Gastrocnemius medialis (tissue), 4 donors: ENCODE measurements at regions of chr18 and their contacts with region 1.

Region 1: GRCh38 chr18:43571078-43571689 is 293.9 kb upstream of the SYT4 start:
- DNase-seq: no peak
- ATAC-seq: no peak
- H3K4me3 ChIP-seq: no peak overlapping the region
- H3K27ac ChIP-seq: no peak overlapping the region
- H3K4me1 ChIP-seq: no peaks in the 10 kb centered on the region
- H3K27me3 ChIP-seq: no peaks in the 10 kb centered on the region
- CTCF ChIP-seq: peak in 4 of 5 experiments; percentile 21 to 62 (median 52)
- POLR2A ChIP-seq: no peak

Region 2: GRCh38 chr18:42114310-42114943 is 1456.8 kb before region 1 on chr18:
- in situ Hi-C with region 1: loop called (anchors 25 kb)
- intact Hi-C with region 1: no loop called
- DNase-seq: peak; percentile 11 to 30
- ATAC-seq: peak; percentile 77 to 79
- H3K4me3 ChIP-seq: peak overlapping the region in 2 of 4 donors; percentile 18 to 39
- H3K27ac ChIP-seq: no peak overlapping the region
- H3K4me1 ChIP-seq: peaks cover 0 to 8% of the 10 kb centered on the region in 2 donors
- H3K27me3 ChIP-seq: no peaks in the 10 kb centered on the region
- CTCF ChIP-seq: peak; percentile 50 to 87 (median 65)
- POLR2A ChIP-seq: no peak

Region 3: GRCh38 chr18:42298759-42299675 is 1272.2 kb before region 1 on chr18:
- in situ Hi-C with region 1: loop called in 2 of 4 experiments (anchors 25 kb)
- intact Hi-C with region 1: no loop called
- DNase-seq: peak; percentile 46 to 53
- ATAC-seq: peak; percentile 73
- H3K4me3 ChIP-seq: peak overlapping the region in 3 of 4 donors; percentile 25 to 38 (median 26)
- H3K27ac ChIP-seq: peak overlapping the region in 1 of 4 donors; percentile 35
- H3K4me1 ChIP-seq: no peaks in the 10 kb centered on the region
- H3K27me3 ChIP-seq: no peaks in the 10 kb centered on the region
- CTCF ChIP-seq: peak; percentile 53 to 78 (median 68)
- POLR2A ChIP-seq: no peak

Region 4: GRCh38 chr18:42310956-42311355 is 1260.2 kb before region 1 on chr18:
- in situ Hi-C with region 1: loop called in 1 of 4 experiments (anchors 25 kb)
- intact Hi-C with region 1: no loop called
- DNase-seq: peak; percentile 29 to 64
- ATAC-seq: peak; percentile 75 to 76
- H3K4me3 ChIP-seq: no peak overlapping the region
- H3K27ac ChIP-seq: no peak overlapping the region
- H3K4me1 ChIP-seq: no peaks in the 10 kb centered on the region
- H3K27me3 ChIP-seq: no peaks in the 10 kb centered on the region
- CTCF ChIP-seq: no peak
- POLR2A ChIP-seq: no peak

Region 5: GRCh38 chr18:43587538-43588153 is 16.5 kb after region 1 on chr18:
- in situ Hi-C with region 1: no loop called
- intact Hi-C with region 1: loop called (anchors 1 kb)
- DNase-seq: no peak
- ATAC-seq: peak in 1 of 2 donors; percentile 21
- H3K4me3 ChIP-seq: no peak overlapping the region
- H3K27ac ChIP-seq: no peak overlapping the region
- H3K4me1 ChIP-seq: peaks cover 0 to 3% of the 10 kb centered on the region in 2 donors
- H3K27me3 ChIP-seq: no peaks in the 10 kb centered on the region
- CTCF ChIP-seq: peak; percentile 33 to 68 (median 49)
- POLR2A ChIP-seq: no peak

Region 6: DNA sequence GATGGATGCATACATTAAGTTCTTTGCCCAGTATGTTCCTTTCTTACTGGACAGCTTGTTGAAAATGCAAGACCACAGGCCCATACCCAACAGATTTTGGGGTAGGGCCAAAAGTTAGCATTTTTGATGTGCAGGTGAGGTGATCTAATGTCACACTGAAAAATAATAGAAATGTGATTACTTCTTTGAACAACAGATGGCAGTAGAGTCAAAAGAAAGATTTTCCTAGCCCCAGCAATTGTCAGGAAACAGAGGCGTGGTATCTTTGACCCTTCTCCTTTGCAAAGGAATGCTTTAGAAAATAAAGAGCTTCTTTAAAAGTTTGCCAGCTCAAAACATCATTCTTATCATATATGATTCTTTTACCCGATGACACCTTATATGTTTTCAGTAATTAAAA is 49.8 kb after region 1 on chr18:
- in situ Hi-C with region 1: no loop called
- intact Hi-C with region 1: no loop called
- DNase-seq: no peak
- ATAC-seq: no peak
- H3K4me3 ChIP-seq: no peak overlapping the region
- H3K27ac ChIP-seq: no peak overlapping the region
- H3K4me1 ChIP-seq: no peaks in the 10 kb centered on the region
- H3K27me3 ChIP-seq: no peaks in the 10 kb centered on the region
- CTCF ChIP-seq: peak; percentile 39 to 56 (median 51)
- POLR2A ChIP-seq: no peak

Region 7: DNA sequence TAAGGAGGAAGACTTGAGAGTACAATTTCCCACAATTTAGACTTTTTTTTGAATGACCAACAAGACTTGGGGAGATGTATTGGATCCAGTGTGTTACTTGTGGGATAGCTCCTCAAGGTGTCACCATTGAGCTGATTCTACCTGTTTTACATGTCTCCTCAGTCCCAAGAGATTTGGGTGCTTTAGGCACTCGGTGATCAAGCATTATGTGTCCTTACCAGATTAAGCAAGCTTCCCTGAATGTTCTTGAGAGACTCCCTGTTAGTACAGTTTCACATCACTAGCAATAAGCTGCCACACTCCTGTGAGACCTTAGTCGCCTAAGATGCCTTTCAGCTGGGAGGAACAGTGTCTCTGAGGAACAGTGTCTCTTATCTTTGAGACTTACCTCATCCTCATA is 90.4 kb after region 1 on chr18:
- in situ Hi-C with region 1: loop called in 1 of 4 experiments (anchors 25 kb)
- intact Hi-C with region 1: no loop called
- DNase-seq: no peak
- ATAC-seq: no peak
- H3K4me3 ChIP-seq: no peak overlapping the region
- H3K27ac ChIP-seq: no peak overlapping the region
- H3K4me1 ChIP-seq: peaks cover 0 to 7% of the 10 kb centered on the region in 2 donors
- H3K27me3 ChIP-seq: no peaks in the 10 kb centered on the region
- CTCF ChIP-seq: no peak
- POLR2A ChIP-seq: no peak

Region 8: GRCh38 chr18:44216169-44216568 is 645.0 kb after region 1 on chr18:
- in situ Hi-C with region 1: no loop called
- intact Hi-C with region 1: no loop called
- DNase-seq: no peak
- ATAC-seq: no peak
- H3K4me3 ChIP-seq: no peak overlapping the region
- H3K27ac ChIP-seq: no peak overlapping the region
- H3K4me1 ChIP-seq: no peaks in the 10 kb centered on the region
- H3K27me3 ChIP-seq: no peaks in the 10 kb centered on the region
- CTCF ChIP-seq: no peak
- POLR2A ChIP-seq: no peak